CD14-positive monocyte (primary cell): ENCODE measurements at regions of chr9 and their contacts with region 1.

Region 1: GRCh38 chr9:19048966-19049916 is at the start of gene RRAGA:
- DNase-seq: peak; percentile 94 to 96 (median 94)
- H3K4me3 ChIP-seq: peak within 1 kb of the TSS; percentile 85 to 96 (median 89)
- H3K4me3 Mint-ChIP-seq: peak within 1 kb of the TSS; percentile 95 to 96
- H3K27ac ChIP-seq: peak within 1 kb of the TSS; percentile 93 to 95
- H3K27ac Mint-ChIP-seq: peak within 1 kb of the TSS; percentile 92 to 97 (median 97)
- H3K4me1 ChIP-seq: peaks cover 27 to 31% of the 10 kb centered on the region in 2 donors
- H3K4me1 Mint-ChIP-seq: peaks cover 37% of the 10 kb centered on the region
- H3K27me3 ChIP-seq: no peaks in the 10 kb centered on the region
- H3K27me3 Mint-ChIP-seq: peaks cover 0 to 2% (median 0%) of the 10 kb centered on the region in 3 donors
- CTCF ChIP-seq: peak; percentile 77
- polyA plus RNA-seq, gene RRAGA: 21.5 to 115 (median 93.9) TPM

Region 2: DNA sequence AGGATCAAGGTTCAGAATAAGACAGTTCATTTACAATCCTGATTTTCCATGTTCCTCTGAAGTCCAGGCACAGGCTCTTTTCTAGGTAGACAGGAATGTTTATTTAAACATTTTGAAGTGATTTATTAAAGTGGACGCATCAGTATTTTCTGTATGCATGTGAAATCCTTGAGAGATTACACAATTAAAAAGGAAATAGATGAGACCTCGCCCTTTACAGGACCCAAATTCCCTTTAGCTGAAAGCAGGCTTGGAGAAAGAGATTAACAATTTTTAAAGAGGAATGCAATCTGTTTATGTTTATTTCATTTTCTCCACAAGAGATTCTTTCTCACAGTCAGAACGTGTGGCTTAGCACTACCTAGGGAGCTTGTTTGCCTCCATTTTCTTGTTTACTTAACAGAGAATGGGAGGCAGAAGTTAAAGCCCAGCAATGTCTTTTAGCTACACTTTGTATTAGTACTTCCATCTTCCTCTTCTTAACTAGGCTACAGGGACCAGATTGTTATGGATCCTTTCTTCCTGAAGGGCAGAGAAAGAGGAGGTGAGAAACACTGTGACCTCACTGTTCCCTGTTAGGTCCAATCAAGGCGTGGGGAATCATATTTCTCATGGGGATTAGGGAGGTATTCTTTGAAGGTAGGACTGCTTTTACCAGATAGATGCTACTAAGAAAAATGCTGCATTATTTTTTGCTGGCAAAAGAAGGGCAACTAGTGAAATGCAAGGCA is 1054.4 kb before region 1 on chr9:
- intact Hi-C with region 1: no loop called
- DNase-seq: no peak
- H3K4me3 ChIP-seq: no peak overlapping the region
- H3K4me3 Mint-ChIP-seq: no peak overlapping the region
- H3K27ac ChIP-seq: no peak overlapping the region
- H3K27ac Mint-ChIP-seq: no peak overlapping the region
- H3K4me1 ChIP-seq: no peaks in the 10 kb centered on the region
- H3K4me1 Mint-ChIP-seq: no peaks in the 10 kb centered on the region
- H3K27me3 ChIP-seq: no peaks in the 10 kb centered on the region
- H3K27me3 Mint-ChIP-seq: peaks cover 0 to 3% (median 1%) of the 10 kb centered on the region in 3 donors
- CTCF ChIP-seq: no peak

Region 3: DNA sequence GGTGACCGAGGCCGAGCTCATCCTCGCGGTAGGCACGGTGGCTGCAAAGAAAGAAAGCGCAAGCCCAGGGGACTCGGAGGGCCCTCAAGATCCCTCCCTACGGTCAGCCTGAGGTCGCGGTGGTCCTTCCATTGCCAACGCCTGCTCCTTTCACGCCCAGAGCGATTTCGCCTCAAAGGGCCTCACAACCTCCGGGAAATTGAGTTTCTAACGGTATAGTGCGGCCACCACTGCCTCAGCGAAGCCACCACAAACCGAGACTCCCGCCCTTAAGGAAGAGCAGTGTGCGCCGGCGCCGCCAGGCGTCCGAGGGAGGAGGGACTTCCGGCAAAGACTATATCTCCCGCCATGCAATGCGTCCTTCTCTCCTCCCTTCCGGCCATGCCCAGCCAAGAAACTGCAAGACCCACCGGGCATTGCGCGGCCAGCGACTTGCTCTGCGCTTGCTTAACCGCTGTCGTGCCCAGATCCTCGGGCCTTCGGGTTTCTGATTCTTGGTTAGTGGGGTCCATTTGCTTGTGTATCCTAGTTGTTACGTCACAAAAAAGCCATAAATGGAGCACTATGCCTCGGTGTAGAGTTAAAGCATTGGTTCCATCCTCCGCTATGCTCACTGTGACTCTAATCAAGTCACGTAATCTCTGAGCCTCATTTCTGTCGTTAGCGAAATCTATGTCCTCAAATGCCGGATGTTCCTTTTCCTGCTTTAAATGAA is 53.5 kb after region 1 on chr9 and contains the start of gene HAUS6:
- intact Hi-C with region 1: loop called in 1 of 2 experiments (anchors 10 kb)
- DNase-seq: peak; percentile 96 to 97 (median 97)
- H3K4me3 ChIP-seq: peak within 1 kb of the TSS; percentile 72 to 92 (median 75)
- H3K4me3 Mint-ChIP-seq: peak within 1 kb of the TSS; percentile 92 to 95
- H3K27ac ChIP-seq: peak within 1 kb of the TSS; percentile 67 to 99
- H3K27ac Mint-ChIP-seq: peak within 1 kb of the TSS; percentile 92 to 96 (median 95)
- H3K4me1 ChIP-seq: peaks cover 17 to 23% of the 10 kb centered on the region in 2 donors
- H3K4me1 Mint-ChIP-seq: peaks cover 15% of the 10 kb centered on the region
- H3K27me3 ChIP-seq: no peaks in the 10 kb centered on the region
- H3K27me3 Mint-ChIP-seq: no peaks in the 10 kb centered on the region
- CTCF ChIP-seq: no peak
- polyA plus RNA-seq, gene HAUS6: 1.3 to 4.1 (median 2.3) TPM

Region 4: DNA sequence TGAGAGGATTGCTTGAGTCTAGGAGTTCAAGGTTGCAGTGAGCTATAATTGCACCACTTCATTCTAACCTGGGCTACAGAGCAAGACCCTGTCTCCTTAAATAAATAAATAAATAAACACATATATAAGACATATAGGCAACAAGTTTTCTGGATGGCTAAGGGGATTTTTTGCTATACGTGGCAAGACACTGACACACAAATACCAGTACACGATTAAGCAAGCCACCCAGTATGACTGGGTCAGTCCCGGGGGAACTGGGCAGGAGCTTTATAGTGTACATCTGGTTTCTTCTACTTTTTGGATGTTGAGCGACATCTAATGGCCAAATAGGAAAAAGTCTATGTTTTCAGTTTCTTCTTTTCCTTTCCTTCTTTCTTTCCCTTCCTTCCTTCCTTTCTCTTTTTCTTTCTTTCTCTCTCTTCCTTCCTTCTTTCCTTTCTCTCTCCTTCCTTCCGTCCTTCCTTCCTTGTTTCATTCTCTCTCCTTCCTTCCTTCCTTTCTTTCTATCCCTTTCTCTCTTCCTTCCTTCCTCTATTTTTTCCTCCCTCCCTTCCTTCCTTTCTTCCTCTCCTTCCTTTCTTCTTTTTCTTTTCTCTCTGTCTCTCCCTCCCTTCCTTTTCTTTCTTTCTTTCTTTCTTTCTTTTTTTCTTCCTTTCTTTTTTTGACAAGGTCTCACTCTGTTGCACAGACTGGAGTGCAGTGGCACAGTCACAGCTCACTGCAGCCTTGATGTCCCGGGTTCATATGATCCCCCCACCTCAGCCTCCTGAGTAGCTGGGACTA is 125.1 kb after region 1 on chr9:
- intact Hi-C with region 1: loop called in 1 of 2 experiments (anchors 2 kb)
- DNase-seq: peak; percentile 89 to 97 (median 93)
- H3K4me3 ChIP-seq: no peak overlapping the region
- H3K4me3 Mint-ChIP-seq: peak overlapping the region in 1 of 2 donors; percentile 43
- H3K27ac ChIP-seq: peak overlapping the region; percentile 10 to 79
- H3K27ac Mint-ChIP-seq: peak overlapping the region; percentile 77 to 91 (median 85)
- H3K4me1 ChIP-seq: peaks cover 26 to 35% of the 10 kb centered on the region in 2 donors
- H3K4me1 Mint-ChIP-seq: peaks cover 33% of the 10 kb centered on the region
- H3K27me3 ChIP-seq: no peaks in the 10 kb centered on the region
- H3K27me3 Mint-ChIP-seq: peaks cover 0 to 7% (median 2%) of the 10 kb centered on the region in 3 donors
- CTCF ChIP-seq: peak; percentile 84

Region 5: DNA sequence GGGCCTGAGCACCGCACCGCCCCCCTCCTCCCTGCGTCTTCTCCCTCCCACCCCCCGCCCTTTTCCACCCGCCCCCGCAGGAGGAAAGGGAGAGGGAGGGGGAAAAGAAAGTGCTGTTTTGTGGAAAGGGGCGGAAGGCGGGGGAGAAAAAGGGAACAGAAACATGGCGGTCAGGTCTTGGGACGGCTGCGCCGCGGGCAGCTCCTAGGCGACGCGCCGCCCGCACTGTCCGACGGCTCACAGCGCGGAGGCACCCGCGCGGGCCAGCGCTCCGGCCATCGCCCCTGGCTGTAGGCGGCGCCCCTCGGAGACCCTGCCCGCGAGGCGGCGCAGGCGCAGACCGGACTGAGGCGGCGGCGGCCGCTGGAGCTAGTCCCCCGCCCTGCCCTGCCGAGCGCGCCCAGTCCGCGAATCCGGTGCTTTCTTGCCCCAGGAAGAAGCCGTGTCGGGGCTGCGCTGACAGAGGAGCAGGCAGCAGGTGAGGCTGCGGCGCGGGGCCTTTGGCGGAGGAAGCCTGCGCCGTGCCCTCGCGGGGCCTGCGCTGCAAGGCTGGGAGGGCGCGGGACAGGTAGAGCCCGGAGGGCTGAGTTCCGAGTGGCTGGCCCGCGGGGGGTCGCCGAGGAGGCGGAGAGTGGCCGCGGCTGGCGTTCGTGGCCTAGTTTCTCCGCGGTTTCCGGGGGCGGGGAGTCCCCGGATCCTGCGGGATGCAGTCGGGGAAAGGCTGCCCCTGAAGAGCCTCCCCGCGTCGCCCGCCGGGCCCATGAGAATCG is 181.3 kb after region 1 on chr9 and contains the start of gene DENND4C:
- intact Hi-C with region 1: loop called in 1 of 2 experiments (anchors 2 kb)
- DNase-seq: peak; percentile 78 to 83 (median 81)
- H3K4me3 ChIP-seq: peak within 1 kb of the TSS; percentile 77 to 83 (median 82)
- H3K4me3 Mint-ChIP-seq: peak within 1 kb of the TSS; percentile 80 to 92
- H3K27ac ChIP-seq: peak within 1 kb of the TSS; percentile 60 to 81
- H3K27ac Mint-ChIP-seq: peak within 1 kb of the TSS in 6 of 7 donors; percentile 50 to 90 (median 79)
- H3K4me1 ChIP-seq: peaks cover 29 to 33% of the 10 kb centered on the region in 2 donors
- H3K4me1 Mint-ChIP-seq: peaks cover 12% of the 10 kb centered on the region
- H3K27me3 ChIP-seq: peaks cover 0 to 3% of the 10 kb centered on the region in 2 donors
- H3K27me3 Mint-ChIP-seq: peaks cover 2 to 3% (median 3%) of the 10 kb centered on the region in 3 donors
- CTCF ChIP-seq: no peak
- polyA plus RNA-seq, gene DENND4C: 8.1 to 15.4 (median 12.7) TPM

Region 6: GRCh38 chr9:19379697-19380046 is 330.4 kb after region 1 on chr9:
- intact Hi-C with region 1: loop called in 1 of 2 experiments (anchors 5 kb)
- DNase-seq: peak in 1 of 3 donors; percentile 17
- H3K4me3 ChIP-seq: peak overlapping the region; percentile 53 to 94 (median 63)
- H3K4me3 Mint-ChIP-seq: peak overlapping the region; percentile 96 to 99
- H3K27ac ChIP-seq: peak overlapping the region; percentile 73 to 93
- H3K27ac Mint-ChIP-seq: peak overlapping the region; percentile 97 to 100 (median 99)
- H3K4me1 ChIP-seq: peaks cover 22 to 24% of the 10 kb centered on the region in 2 donors
- H3K4me1 Mint-ChIP-seq: peaks cover 32% of the 10 kb centered on the region
- H3K27me3 ChIP-seq: no peaks in the 10 kb centered on the region
- H3K27me3 Mint-ChIP-seq: peaks cover 0 to 4% (median 0%) of the 10 kb centered on the region in 3 donors
- CTCF ChIP-seq: no peak

Region 7: GRCh38 chr9:19517202-19517942 is 468.1 kb after region 1 on chr9:
- intact Hi-C with region 1: no loop called
- DNase-seq: no peak
- H3K4me3 ChIP-seq: no peak overlapping the region
- H3K4me3 Mint-ChIP-seq: peak overlapping the region in 1 of 2 donors; percentile 11
- H3K27ac ChIP-seq: no peak overlapping the region
- H3K27ac Mint-ChIP-seq: no peak overlapping the region
- H3K4me1 ChIP-seq: no peaks in the 10 kb centered on the region
- H3K4me1 Mint-ChIP-seq: peaks cover 4% of the 10 kb centered on the region
- H3K27me3 ChIP-seq: no peaks in the 10 kb centered on the region
- H3K27me3 Mint-ChIP-seq: peaks cover 1 to 2% (median 1%) of the 10 kb centered on the region in 3 donors
- CTCF ChIP-seq: peak; percentile 11